GM10248 (cell line): ENCODE measurements at regions of chr9 and their contacts with region 1.

Region 1: DNA sequence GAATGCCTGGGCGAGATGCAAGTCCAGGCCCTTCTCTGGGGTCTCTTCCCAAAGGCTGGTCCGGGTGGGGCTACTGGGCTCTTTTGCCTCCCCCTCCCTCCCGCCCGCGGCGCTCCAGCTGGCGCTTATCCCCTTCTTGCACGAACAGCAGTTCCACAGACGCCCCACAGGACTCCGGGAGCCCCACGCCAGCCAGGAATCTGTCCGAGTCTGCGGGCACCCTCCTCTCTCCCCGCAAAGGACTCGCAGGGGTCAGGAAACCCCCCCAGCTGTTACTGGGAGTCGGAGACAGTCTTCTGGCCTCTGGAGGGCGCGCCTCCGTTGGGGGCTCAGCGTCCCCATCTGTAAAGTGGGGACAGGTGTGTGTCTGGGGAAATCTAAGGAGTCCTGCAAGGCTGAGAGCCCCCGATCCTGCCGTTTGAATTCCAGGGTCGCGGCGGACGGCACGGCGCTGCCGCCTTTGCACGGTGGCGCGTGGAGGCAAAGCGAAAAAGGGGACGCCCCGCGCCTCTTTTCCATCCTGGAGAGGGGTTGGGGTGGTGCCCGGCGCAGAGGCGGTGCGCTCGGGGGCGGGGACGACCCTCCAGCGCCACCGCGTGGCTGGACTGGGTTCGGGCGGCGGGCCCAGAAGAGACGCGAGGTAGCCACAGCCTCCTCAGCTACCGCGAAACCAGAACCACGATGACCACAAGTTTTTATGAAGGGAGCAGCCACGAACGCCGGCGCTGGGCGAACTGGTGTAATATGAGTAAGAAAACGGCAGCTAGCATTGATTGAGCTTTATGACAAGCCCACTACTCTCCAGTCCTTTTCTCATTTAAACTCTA is 2.9 kb upstream of the CCIN start:
- DNase-seq: peak; percentile 93
- CTCF ChIP-seq: peak; percentile 91

Region 2: GRCh38 chr9:36008774-36009300 is 157.5 kb before region 1 on chr9:
- CTCF ChIA-PET with region 1: interaction called, 10 read pairs
- POLR2A ChIA-PET with region 1: no interaction called
- DNase-seq: peak; percentile 75
- CTCF ChIP-seq: peak; percentile 98

Region 3: GRCh38 chr9:36125062-36125855 is 41.1 kb before region 1 on chr9:
- CTCF ChIA-PET with region 1: interaction called, 11 read pairs
- POLR2A ChIA-PET with region 1: interaction called, 5 read pairs
- DNase-seq: no peak
- CTCF ChIP-seq: no peak

Region 4: GRCh38 chr9:36148311-36149051 is 17.8 kb before region 1 on chr9:
- CTCF ChIA-PET with region 1: interaction called, 42 read pairs
- POLR2A ChIA-PET with region 1: no interaction called
- DNase-seq: peak; percentile 58
- CTCF ChIP-seq: no peak

Region 5: DNA sequence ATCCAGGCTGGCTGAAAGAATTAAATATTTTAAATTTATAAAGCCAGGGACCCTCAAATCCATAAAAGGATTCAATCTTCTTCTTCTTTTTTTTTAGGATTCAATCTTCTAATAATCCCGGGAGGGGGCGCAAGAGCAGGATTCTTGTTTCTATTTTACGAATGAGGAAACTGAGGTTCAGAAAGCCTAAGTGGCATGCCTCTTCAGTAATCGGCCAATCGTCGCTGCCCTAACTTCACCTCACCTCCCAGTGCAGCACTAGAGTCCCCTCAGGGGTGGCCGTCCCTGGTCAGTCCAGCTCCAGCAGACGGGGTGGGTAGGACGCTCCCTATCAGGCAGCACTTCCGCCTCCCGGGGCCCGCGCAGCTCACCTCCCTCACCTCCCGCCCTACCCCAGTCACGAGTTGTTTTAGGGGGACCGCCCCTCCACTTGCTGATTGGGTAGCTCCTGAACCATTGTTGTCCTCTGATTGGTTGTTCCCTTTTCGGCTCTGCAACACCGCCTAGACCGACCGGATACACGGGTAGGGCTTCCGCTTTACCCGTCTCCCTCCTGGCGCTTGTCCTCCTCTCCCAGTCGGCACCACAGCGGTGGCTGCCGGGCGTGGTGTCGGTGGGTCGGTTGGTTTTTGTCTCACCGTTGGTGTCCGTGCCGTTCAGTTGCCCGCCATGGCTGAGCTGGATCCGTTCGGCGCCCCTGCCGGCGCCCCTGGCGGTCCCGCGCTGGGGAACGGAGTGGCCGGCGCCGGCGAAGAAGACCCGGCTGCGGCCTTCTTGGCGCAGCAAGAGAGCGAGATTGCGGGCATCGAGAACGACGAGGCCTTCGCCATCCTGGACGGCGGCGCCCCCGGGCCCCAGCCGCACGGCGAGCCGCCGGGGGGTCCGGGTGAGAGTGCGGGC is 24.3 kb after region 1 on chr9 and contains the start of gene CLTA:
- CTCF ChIA-PET with region 1: interaction called, 31 read pairs
- POLR2A ChIA-PET with region 1: interaction called, 3 read pairs
- DNase-seq: peak; percentile 99
- CTCF ChIP-seq: peak; percentile 39

Region 6: DNA sequence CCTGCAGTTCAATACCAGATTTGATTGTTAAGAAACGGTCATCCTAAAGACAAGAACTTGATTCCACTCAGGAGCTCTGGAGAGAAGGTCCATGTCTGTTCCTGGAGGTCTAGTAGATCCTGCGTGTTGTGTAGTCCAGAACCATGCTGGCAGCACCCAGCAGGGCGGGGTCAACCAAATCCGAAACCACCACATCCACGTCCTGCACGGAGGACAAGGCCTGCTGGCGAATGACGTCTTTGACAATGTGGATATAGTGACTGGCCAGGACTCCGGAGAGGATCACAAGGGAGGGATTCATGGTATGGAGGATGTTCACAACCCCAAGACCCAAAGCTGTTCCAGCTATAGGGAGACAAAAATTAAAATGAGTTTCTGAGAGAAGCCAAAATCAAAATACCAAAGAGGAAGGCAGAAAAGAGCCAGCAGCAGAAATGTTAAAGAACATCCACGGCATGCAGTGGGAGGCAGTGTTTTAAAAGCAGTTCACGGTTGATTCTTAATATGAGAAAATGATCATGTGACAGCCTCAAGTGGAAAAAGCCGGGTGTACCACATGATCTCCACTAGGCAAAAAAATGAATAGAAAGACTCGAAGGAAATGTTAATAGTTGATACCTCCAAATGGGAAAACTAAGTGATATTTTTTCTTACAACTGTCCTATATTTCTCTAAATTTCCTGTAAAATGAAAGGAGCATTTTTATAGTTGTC is 51.1 kb after region 1 on chr9:
- CTCF ChIA-PET with region 1: no interaction called
- POLR2A ChIA-PET with region 1: no interaction called
- DNase-seq: no peak
- CTCF ChIP-seq: no peak